HEK293T (cell line): ENCODE measurements at regions of chr6 and their contacts with region 1.

Region 1: DNA sequence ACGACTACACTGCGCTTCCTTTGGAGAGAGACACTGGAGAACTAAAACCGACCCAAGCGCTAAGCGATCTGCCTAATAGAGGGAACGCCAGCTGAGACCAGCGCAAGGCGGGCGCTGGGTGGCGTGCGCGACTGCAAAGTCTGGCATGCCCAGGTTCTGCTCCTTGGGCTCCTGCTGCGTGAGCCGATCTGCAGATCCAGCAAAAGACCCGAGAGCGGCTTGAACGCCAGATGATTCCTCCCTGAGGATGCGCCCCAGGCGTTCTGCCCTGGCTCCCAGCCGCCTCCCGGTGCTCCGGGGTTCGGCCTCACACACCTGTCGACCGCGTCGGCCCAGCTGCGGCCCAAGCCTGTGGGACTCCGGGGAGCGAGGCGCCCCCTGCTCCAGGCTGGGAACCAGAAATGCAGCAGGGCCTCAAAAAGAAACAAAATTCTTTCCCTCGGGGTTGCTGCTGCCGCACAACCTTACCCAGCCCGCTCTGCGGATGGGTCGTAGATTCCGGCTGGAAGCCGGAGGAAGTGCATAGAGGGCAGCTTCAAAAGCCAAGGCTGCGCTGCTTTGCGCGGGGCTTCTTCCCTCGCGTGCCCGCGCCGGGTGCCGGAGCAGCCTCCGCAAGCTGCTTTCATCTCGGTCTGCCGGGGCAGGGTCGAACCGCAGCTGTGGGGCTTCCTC is 17.9 kb upstream of the PRDM13 start:
- DNase-seq: peak; percentile 84

Region 2: DNA sequence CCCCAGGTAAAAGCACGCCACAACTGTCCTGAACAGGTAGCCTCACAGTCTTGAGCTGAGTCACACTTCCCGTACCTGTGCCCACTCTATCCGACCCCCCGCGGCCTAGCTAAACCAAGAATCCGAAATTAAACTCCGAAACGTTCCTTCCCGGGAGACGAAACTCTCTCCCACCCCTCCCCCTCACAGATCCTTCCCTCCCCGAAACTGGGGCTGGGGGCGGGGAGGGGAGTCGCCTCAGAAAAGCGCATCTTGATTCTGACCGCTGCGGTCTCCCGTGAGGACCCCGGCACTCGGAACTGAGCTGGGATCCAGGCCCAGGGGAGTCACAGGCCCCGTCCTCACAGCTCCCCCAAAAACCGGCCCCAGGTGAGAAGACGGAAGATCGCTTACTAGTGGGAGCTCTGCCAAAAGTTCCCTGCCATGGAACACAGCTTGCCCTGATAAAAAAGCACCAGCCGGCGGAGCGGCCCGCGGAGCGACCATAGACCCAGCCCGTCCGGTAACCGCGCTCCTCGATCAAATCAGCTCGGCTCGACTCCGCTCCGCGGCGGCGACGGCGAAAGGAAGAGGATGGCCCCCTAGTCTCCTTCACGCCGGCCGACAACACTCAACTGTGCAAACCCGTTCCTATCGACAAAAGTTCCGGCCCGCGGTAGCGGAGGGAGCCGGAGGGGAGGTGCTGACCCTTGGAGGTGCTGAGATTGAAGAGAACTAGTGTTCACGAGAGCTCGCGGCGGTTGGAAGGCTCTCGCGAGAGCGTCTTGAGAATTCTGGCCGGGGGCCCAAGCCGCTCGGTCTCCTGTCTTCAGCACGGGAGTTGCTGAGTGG is 20.4 kb before region 1 on chr6 and contains the start of gene CCNC:
- CTCF ChIA-PET with region 1: interaction called, 3 read pairs
- POLR2A ChIA-PET with region 1: interaction called, 16 read pairs
- DNase-seq: peak; percentile 91

Region 3: GRCh38 chr6:99613409-99613704 is 24.6 kb after region 1 on chr6:
- CTCF ChIA-PET with region 1: interaction called, 12 read pairs
- POLR2A ChIA-PET with region 1: interaction called, 18 read pairs
- DNase-seq: peak; percentile 69

Region 4: GRCh38 chr6:99746261-99746895 is 157.6 kb after region 1 on chr6:
- CTCF ChIA-PET with region 1: interaction called, 14 read pairs
- POLR2A ChIA-PET with region 1: no interaction called
- DNase-seq: peak; percentile 65